PC-9 (cell line): ENCODE measurements at regions of chr4 and their contacts with region 1.

Region 1: GRCh38 chr4:176261481-176261880 is 7.5 kb downstream of the ASB5 start:
- DNase-seq: no peak
- H3K4me3 ChIP-seq: no peak overlapping the region
- H3K27ac ChIP-seq: no peak overlapping the region
- H3K4me1 ChIP-seq: peaks cover 10% of the 10 kb centered on the region; the same call in 1 of the 2 replicates
- H3K27me3 ChIP-seq: no peaks in the 10 kb centered on the region
- CTCF ChIP-seq: no peak

Region 2: GRCh38 chr4:176302283-176303275 is 41.1 kb after region 1 on chr4:
- CTCF ChIA-PET with region 1: no interaction called
- POLR2A ChIA-PET with region 1: interaction called, 11 read pairs
- intact Hi-C with region 1: no loop called
- DNase-seq: peak in 1 of 2 experiments; percentile 77
- H3K4me3 ChIP-seq: no peak overlapping the region
- H3K27ac ChIP-seq: no peak overlapping the region
- H3K4me1 ChIP-seq: peaks cover 8% of the 10 kb centered on the region
- H3K27me3 ChIP-seq: no peaks in the 10 kb centered on the region
- CTCF ChIP-seq: no peak